ENCODE measurements at regions of chr11 and their contacts with region 1.

Region 1: GRCh38 chr11:115324581-115325432 is 179.4 kb downstream of the CADM1 start:
- DNase-seq: peak; percentile 22 to 60 (median 36)
- H3K4me3 ChIP-seq: no peak overlapping the region
- H3K27ac ChIP-seq: peak overlapping the region in 1 of 5 donors; percentile 3
- H3K4me1 ChIP-seq: peaks cover 0 to 9% of the 10 kb centered on the region in 2 donors
- H3K27me3 ChIP-seq: no peaks in the 10 kb centered on the region
- CTCF ChIP-seq: peak; percentile 56 to 84 (median 76)
- POLR2A ChIP-seq: no peak

Region 2: DNA sequence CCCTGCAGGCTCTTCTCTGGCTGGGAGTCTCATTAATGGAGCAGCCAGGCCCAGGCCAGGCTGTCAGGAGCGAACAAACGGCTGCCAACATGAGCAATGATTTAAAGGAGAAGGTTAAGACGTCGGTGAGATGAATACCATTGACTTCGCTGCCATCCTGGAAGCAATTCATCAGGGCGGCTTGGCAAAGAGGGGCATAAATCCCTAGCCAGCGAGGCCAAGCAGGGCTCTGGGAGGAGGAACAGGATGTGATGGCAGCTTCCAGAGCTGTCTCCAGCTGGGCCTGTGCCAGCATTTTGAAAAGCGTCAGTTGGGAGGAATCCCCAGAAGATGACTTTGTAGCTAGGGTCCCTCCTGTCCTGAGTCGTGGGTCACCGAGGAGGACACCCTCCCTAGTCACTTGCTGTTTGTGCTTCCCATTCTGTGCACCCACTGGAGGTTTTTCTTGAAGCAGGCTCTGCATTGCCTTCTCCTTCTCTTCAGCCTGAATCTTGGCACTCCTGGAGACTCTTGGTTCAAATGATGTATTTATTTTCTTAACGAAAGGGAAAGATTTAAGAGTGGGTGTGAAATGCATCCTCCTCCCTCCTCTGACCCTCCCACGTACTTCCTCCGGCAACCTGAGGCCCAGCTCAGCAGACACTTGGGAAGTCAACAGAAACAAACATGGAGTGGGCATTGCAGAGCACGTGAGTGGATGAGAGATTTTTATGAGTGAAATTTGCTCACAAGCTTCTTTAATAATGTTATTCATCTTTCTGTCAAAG is 655.7 kb after region 1 on chr11:
- intact Hi-C with region 1: no loop called
- DNase-seq: peak in 4 of 7 donors; percentile 21 to 61 (median 42)
- H3K4me3 ChIP-seq: no peak overlapping the region
- H3K27ac ChIP-seq: no peak overlapping the region
- H3K4me1 ChIP-seq: no peaks in the 10 kb centered on the region
- H3K27me3 ChIP-seq: peaks cover 3% of the 10 kb centered on the region
- CTCF ChIP-seq: no peak
- POLR2A ChIP-seq: no peak

Region 3: GRCh38 chr11:116224154-116224888 is 899.5 kb after region 1 on chr11:
- intact Hi-C with region 1: loop called in 1 of 2 experiments (anchors 10 kb)
- DNase-seq: peak; percentile 26 to 80 (median 52)
- H3K4me3 ChIP-seq: no peak overlapping the region
- H3K27ac ChIP-seq: no peak overlapping the region
- H3K4me1 ChIP-seq: no peaks in the 10 kb centered on the region
- H3K27me3 ChIP-seq: peaks cover 4% of the 10 kb centered on the region
- CTCF ChIP-seq: peak; percentile 18 to 74 (median 58)
- POLR2A ChIP-seq: no peak